Activated naive CD4-positive, alpha-beta T cell treated with anti-CD3 and anti-CD28 coated beads, Interleukin-2, amount 10 ng/mL, durations not matched to agents 7 days and 5 days (primary cell): ENCODE measurements at regions of chr15 and their contacts with region 1.

Region 1: DNA sequence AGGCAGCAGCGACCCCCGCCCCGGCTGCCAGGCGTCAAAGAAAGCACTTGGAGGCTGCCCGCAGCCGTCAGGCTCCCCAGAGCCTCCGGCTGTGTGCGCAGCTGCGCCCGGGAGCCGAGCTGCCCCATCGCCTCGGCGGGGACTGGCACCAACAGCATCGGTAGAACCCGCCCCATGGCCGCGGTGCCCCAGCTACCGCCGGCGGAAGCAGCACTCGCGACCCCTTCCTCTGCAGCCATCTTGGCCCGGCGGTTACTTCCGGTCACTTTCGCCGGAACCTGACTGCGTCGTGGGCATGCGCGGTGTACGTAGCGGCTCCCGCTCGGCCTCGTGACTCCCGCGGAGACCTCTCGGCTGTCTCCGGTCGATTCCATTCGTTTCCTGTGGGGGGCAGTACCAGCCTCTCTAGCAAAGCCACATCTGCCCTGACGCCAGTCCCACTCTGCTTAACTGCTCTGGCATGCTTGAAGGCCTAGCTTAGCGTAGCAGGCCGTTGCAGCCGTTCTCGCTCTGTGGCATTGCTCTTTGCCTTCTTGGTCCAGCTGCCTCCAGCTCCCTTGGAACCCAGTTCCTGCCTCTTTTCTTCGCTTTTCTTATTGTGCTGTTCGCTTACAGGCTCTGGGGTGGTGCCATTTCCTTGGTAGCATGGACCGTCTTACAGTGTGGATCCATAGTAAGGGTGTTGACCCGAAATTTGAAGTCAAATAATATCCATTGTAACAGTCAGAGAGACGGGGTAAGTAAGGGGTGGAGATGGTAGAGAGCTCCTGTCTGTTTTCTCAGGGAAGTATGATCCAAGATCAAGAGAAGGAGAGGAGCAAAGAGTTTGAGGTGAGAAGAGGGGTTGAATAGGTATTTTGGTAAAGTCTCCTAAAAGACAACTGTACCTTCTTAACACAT is at the start of gene SPG11:
- DNase-seq: peak; percentile 98
- H3K4me3 Mint-ChIP-seq: peak within 1 kb of the TSS; percentile 98
- H3K27ac Mint-ChIP-seq: peak within 1 kb of the TSS; percentile 100
- H3K4me1 Mint-ChIP-seq: peaks cover 58% of the 10 kb centered on the region
- H3K27me3 Mint-ChIP-seq: no peaks in the 10 kb centered on the region

Region 2: DNA sequence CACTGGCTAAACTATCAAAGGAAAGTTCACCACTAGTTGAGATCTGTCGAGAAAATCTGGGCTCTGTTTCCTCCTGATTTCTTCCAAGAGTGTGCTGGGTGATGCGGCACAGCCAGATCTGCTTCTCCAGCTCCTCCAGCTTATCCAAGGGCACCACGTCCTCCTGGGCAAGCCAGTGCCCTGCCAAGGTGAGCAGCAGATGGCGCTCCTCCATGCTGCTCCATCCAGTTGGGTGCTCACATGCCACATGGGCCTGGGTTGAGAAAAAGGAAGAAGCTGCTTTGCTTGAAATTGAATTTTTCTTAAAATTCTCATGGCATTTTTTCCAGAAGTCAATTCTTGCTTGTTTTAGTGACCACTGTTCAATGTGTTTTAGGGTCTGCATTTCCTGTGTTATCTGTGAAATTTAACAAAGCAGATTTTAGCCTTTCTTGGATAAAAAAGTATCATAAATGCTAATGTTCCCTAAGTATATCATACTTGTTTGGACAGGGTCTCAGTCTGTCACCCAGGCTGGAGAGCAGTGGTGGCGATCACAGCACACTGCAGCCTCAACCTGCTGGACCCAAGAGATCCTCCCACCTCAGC is 79.4 kb before region 1 on chr15:
- CTCF ChIA-PET with region 1: interaction called, 12 read pairs
- DNase-seq: peak; percentile 70
- H3K4me3 Mint-ChIP-seq: no peak overlapping the region
- H3K27ac Mint-ChIP-seq: peak overlapping the region; percentile 50
- H3K4me1 Mint-ChIP-seq: peaks cover 4% of the 10 kb centered on the region
- H3K27me3 Mint-ChIP-seq: no peaks in the 10 kb centered on the region

Region 3: DNA sequence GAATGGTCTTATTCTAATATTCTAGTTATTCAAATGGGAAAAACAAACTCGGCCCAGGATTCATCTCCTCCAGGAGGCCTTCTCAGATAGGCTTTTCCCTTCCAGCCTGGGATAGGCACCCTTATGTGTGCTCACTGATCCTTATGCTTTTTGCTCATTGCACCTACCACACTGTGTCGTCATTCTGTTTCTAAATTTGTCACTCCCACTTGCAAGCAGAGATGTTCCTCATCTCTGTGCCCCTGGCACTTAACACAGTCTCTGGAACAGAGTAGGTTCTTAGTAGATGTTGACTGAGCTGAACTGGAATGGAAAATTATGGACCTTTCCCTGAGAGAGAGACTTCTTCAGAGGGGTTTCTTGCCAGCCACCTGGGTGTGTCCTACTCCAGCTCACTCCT is 18.6 kb after region 1 on chr15:
- CTCF ChIA-PET with region 1: interaction called, 42 read pairs
- DNase-seq: no peak
- H3K4me3 Mint-ChIP-seq: peak overlapping the region; percentile 59
- H3K27ac Mint-ChIP-seq: peak overlapping the region; percentile 95
- H3K4me1 Mint-ChIP-seq: peaks cover 89% of the 10 kb centered on the region
- H3K27me3 Mint-ChIP-seq: no peaks in the 10 kb centered on the region

Region 4: DNA sequence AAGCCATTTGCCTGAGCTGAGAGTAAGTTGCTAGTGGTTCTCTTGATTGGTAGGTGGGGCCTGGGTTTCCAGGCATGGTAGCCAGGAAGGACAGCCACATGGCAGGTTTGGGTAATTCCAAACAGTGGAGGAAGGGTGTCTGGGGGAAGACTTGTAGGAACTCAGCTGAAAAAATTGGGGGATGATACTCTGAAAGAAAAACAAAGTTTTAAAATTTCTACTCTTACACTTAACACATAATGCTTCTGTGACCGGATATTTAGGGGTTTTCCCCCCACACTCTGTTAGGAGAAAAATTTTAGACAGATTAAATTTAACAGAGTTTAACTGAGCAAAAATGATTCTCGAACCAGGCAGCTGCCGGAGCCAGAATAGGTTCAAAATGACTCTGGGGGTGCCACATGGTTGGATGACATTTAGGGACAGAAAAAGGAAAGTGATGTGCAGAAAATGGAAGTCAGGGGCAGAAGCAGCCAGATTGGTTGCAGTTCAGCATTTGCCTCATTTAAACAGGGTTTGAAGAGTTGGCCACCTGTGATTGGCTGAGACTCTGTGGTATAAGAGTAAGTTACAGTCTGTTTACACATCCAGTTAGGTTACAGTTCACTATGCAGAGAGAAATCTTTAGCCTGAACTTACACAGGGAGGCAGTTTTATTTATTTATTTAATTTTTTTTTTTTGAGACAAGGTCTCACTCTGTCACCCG is 55.8 kb after region 1 on chr15:
- CTCF ChIA-PET with region 1: interaction called, 168 read pairs
- DNase-seq: peak; percentile 65
- H3K4me3 Mint-ChIP-seq: peak overlapping the region; percentile 40
- H3K27ac Mint-ChIP-seq: peak overlapping the region; percentile 97
- H3K4me1 Mint-ChIP-seq: peaks cover 93% of the 10 kb centered on the region
- H3K27me3 Mint-ChIP-seq: no peaks in the 10 kb centered on the region

Region 5: GRCh38 chr15:44738340-44738984 is 74.8 kb after region 1 on chr15:
- CTCF ChIA-PET with region 1: interaction called, 165 read pairs
- DNase-seq: no peak
- H3K4me3 Mint-ChIP-seq: peak overlapping the region; percentile 11
- H3K27ac Mint-ChIP-seq: peak overlapping the region; percentile 73
- H3K4me1 Mint-ChIP-seq: peaks cover 59% of the 10 kb centered on the region
- H3K27me3 Mint-ChIP-seq: no peaks in the 10 kb centered on the region

Region 6: DNA sequence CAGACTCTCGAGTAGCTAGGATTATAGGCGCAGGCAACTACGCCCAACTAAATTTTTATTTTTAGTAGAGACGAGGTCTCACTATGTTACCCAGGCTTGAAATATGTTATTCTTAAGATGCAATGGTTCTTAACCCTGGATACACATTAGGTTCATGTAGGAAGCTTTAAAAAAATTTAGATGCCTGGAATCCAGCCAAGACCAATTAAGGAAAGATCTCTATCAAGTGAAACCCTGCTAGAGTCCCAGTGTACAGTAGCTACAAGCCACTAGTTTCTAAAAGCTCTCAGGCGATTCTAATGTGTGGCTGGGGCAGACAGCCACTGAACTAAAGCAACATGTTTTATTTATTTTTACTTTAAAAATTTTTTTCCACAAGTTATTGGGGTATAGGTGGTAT is 105.9 kb after region 1 on chr15:
- CTCF ChIA-PET with region 1: no interaction called
- DNase-seq: no peak
- H3K4me3 Mint-ChIP-seq: no peak overlapping the region
- H3K27ac Mint-ChIP-seq: no peak overlapping the region
- H3K4me1 Mint-ChIP-seq: peaks cover 6% of the 10 kb centered on the region
- H3K27me3 Mint-ChIP-seq: no peaks in the 10 kb centered on the region